PC-9 (cell line): ENCODE measurements at regions of chr3 and their contacts with region 1.

Region 1: GRCh38 chr3:13884851-13885703 is 5.2 kb upstream of the WNT7A start:
- DNase-seq: peak; percentile 49 to 72
- H3K4me3 ChIP-seq: no peak overlapping the region
- H3K27ac ChIP-seq: no peak overlapping the region
- H3K4me1 ChIP-seq: peaks cover 7% of the 10 kb centered on the region
- H3K27me3 ChIP-seq: no peaks in the 10 kb centered on the region
- CTCF ChIP-seq: peak; percentile 98

Region 2: DNA sequence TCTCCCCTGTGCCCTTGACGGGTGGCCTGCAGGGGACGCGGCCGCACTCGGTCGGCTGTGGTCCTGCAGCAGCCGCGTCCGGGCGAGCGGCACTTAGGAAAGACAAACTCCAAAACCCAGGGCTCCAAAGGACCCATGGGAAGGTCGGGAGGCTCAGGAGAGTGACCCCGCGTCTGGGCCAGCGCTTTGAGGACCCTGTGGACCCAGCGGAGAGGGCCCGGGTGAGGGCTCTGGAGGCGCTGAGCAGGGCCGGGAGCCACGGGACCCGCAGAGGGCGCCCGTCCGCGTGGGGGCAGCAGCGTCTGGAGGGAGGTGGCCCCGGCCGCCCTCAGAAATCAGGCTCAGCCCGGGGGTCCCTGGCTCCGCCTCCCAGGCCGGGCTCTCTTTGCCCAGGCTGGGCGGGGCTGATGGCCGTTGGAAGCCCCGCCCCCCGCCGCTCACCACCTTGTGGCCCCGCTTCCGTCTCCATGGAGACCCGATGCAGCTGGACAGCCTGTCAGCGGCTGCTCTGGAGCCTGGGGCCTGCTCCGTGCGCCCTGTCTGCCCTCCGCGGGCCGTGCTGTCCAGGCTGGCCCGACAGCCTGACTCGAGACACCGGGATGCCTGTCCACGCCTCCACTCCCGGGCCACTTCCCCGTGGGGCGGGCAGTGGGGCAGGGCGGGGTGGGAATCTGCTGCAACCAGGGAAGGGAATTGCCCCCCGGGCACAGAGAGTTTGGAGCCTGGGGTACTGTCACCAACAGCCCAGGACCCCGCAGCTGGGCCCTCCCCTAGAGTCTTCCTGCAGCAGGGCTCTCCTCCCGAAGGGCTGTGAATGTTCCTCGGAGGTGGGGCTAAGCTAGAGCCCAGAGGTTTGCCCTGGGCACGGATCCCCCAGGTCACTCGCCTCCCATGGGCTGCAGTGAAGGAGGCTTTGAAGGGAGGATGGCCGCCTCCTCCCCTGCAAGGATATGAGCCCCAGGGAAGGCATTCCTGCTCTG is 1008.9 kb before region 1 on chr3:
- CTCF ChIA-PET with region 1: no interaction called
- POLR2A ChIA-PET with region 1: no interaction called
- intact Hi-C with region 1: loop called (anchors 10 kb)
- DNase-seq: peak in 1 of 2 experiments; percentile 31
- H3K4me3 ChIP-seq: no peak overlapping the region
- H3K27ac ChIP-seq: no peak overlapping the region
- H3K4me1 ChIP-seq: no peaks in the 10 kb centered on the region
- H3K27me3 ChIP-seq: peaks cover 33% of the 10 kb centered on the region
- CTCF ChIP-seq: no peak

Region 3: DNA sequence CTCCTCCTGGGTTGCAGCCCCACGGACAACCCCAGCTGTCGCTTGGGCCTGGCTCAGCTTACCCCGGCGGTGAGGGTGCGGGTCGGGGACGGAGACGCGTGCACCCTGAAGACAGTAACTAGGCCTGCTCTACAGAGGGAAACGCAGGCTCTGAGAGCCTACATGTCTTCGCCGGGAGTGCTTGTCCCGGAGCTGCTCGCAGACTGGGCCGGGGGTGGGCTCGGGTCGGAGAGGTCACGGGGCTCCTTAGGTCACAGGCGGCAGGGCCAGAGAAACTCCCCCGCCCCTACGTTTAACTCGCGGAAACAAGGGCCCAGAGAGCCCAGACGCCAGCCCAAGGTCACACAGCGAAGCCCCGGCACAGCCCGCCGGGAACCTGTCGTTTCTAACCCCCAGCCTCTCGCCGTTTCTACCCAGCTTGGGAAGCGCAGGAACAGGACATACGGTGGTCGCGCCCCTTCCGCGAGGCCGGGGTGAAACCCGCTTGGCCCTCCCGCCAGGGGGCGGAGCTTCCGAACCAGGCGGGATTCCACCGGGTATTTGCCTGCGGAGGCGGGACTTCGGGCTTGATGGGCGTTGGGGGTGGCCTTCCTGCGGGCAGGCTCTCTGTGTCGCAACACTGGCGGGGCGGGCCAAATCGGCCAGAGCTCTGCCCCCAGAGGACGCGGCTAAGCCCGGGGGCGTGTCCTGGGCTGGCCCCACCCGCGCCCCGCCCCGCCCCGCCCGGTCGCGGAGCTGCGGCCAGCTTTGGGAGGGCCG is 405.3 kb before region 1 on chr3 and contains the start of gene HDAC11:
- CTCF ChIA-PET with region 1: interaction called, 15 read pairs
- POLR2A ChIA-PET with region 1: no interaction called
- intact Hi-C with region 1: no loop called
- DNase-seq: peak; percentile 87 to 98
- H3K4me3 ChIP-seq: peak within 1 kb of the TSS; percentile 94
- H3K27ac ChIP-seq: no peak within 1 kb of the TSS
- H3K4me1 ChIP-seq: peaks cover 39% of the 10 kb centered on the region
- H3K27me3 ChIP-seq: no peaks in the 10 kb centered on the region
- CTCF ChIP-seq: peak; percentile 55
- total RNA-seq, gene HDAC11: 18.4 and 24.3 TPM in 2 replicates

Region 4: DNA sequence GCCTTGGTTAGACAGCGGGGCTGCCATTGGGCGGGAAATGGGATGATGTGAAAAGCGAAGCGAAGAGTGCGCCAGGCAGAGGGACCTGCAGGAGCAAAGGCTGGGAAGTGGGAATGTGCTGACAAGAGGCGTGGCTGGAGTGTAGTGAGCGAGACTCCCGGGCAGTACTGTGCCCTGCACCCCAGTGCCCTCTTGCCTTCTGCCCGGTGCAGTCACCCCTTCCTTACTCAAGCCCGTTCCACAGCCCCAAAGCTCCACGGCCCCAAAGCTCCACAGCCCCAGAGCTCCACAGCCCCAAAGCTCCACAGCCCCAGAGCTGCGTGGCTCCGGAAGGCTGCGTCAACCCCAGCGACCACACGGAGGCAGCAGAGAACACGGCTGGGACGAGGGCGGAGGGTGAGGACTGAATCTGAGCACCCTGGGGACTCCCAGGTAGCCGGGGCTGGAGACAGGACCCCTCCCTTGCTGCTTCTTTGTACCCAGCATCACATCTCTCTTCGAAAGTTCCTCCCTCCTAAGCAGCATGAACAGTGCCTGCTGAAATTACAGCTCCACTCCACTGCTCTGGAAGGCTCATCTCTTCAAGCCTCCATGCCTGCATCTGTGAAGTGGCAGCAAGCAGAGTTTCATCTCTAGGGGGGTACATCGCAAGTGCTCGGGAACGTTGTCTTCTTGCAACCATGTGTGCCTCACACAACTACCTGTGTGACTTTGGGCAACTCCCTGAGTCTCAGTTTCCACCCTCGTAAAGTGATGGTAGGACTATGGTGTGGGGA is 227.2 kb before region 1 on chr3:
- CTCF ChIA-PET with region 1: interaction called, 37 read pairs
- POLR2A ChIA-PET with region 1: no interaction called
- intact Hi-C with region 1: loop called (anchors 1 kb)
- DNase-seq: peak; percentile 39 to 67
- H3K4me3 ChIP-seq: no peak overlapping the region
- H3K27ac ChIP-seq: no peak overlapping the region
- H3K4me1 ChIP-seq: peaks cover 34% of the 10 kb centered on the region
- H3K27me3 ChIP-seq: no peaks in the 10 kb centered on the region
- CTCF ChIP-seq: peak; percentile 95

Region 5: DNA sequence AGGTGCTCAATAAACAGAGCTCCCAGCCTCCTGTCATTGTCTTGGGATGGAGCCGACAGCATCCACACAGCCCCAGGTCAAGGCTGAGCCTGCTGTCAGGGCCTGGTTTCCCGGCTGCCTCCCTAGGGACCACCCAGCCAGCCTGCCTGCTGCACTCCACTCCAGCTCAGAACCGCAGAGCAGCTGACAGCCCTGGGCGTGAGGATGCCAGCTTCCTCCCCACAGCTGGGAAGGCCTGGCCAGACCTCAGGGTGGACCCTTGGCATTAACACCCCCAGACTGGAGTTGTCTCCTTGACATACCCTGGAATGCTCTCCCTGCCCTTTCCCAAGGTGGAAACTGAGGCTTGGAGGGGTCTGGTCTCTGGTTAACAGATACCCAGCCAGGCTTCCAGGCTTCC is 117.2 kb before region 1 on chr3:
- CTCF ChIA-PET with region 1: interaction called, 5 read pairs
- POLR2A ChIA-PET with region 1: no interaction called
- intact Hi-C with region 1: loop called (anchors 2 kb)
- DNase-seq: no peak
- H3K4me3 ChIP-seq: no peak overlapping the region
- H3K27ac ChIP-seq: no peak overlapping the region
- H3K4me1 ChIP-seq: peaks cover 23% of the 10 kb centered on the region
- H3K27me3 ChIP-seq: no peaks in the 10 kb centered on the region
- CTCF ChIP-seq: no peak

Region 6: DNA sequence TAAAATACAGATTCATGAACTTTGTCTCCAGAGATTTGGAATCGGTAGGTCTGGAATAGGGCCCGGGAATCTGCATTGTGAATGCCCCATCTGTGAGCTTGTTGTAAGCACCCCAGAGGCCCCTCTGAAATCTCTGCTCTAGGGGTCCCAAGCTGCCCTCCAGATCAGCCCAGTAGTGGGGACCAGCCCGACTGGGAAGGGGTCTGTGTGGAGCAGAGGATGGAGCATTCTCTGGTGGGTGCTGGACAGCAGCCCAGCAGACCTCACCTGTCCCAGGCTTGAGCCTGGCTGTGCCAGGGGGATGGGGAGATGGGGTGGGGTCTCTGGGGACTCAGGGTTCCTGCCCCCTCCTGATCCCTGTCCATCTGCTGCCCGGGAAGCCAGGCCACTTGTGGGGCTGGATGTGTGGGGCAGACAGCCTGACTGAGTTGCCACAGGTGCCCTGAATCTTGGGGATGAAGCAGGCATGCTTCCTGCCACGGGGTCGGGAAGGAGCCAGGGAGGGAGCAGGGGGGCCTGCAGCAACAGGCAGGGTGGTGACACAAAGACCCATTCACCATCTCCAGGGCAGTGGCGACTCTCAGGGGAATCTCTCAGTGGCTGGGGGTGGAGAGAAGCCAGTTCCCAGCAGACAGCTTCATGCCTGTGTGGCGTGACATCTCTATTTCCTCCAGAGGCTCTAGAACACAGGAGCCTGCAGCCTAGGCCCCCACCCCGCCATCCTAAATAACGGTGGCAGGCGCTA is 104.5 kb before region 1 on chr3:
- CTCF ChIA-PET with region 1: no interaction called
- POLR2A ChIA-PET with region 1: interaction called, 12 read pairs
- intact Hi-C with region 1: no loop called
- DNase-seq: no peak
- H3K4me3 ChIP-seq: no peak overlapping the region
- H3K27ac ChIP-seq: no peak overlapping the region
- H3K4me1 ChIP-seq: no peaks in the 10 kb centered on the region
- H3K27me3 ChIP-seq: no peaks in the 10 kb centered on the region
- CTCF ChIP-seq: no peak

Region 7: GRCh38 chr3:13822042-13822441 is 63.0 kb before region 1 on chr3:
- CTCF ChIA-PET with region 1: no interaction called
- POLR2A ChIA-PET with region 1: no interaction called
- intact Hi-C with region 1: no loop called
- DNase-seq: peak in 1 of 2 experiments; percentile 53
- H3K4me3 ChIP-seq: no peak overlapping the region
- H3K27ac ChIP-seq: no peak overlapping the region
- H3K4me1 ChIP-seq: peaks cover 55% of the 10 kb centered on the region
- H3K27me3 ChIP-seq: no peaks in the 10 kb centered on the region
- CTCF ChIP-seq: no peak

Region 8: DNA sequence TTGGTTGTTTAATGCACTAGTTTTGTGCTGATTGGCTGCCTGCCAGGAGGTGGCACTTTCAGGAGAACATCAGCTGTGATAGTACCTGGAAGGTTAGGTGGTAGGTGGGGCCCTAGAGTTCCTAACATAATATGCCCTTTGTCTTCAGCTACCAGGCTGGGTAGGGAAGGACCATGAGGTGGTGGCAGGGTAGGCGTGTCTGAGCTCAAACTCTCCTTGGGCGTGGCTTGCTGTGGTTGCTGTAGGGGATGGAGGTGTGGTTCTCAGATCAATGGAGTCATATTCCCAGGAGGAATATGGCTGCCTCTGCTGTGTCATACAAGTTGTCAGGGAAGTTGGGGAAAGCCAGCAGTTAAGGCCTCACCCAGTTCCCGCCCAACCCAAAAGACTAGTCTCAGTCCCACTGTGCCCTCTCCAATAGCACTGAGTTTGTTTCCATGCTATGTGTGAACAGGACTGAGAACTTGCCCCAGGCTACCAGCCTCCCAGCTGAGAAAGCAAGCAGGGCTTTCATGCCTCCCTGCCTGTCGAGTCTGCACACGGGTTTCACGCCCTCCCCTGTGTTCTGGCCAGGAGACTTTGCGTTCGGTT is 131.9 kb after region 1 on chr3:
- CTCF ChIA-PET with region 1: no interaction called
- POLR2A ChIA-PET with region 1: no interaction called
- intact Hi-C with region 1: no loop called
- DNase-seq: peak; percentile 79 to 88
- H3K4me3 ChIP-seq: no peak overlapping the region
- H3K27ac ChIP-seq: 0 out of 2 replicates have a peak overlapping the region, but pooled peaks have one; percentile 24
- H3K4me1 ChIP-seq: peaks cover 7% of the 10 kb centered on the region; the same call in 1 of the 2 replicates
- H3K27me3 ChIP-seq: no peaks in the 10 kb centered on the region; the same call in 1 of the 2 replicates
- CTCF ChIP-seq: no peak

Region 9: DNA sequence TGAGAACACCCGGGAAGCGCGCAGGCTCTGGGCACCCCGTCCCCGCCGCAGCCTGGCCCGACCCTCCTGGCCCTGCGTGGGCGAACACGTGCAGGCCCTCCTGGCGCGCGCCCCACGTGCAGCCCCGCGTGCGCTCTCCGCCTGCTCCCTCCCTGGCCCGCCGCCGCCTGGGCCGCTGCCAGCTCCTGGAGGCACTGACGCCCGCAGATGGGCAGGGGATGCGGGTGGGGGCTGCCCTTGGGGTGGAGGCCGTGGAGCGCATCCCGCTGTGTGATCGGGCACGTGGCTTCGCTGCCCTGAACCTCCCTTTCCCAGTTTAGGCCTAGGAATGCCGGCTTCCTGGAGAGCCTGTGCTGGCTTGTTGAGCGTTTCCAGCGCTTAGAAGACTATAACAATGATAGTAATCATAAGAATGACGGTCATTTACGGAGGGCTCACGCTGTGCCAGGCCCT is 412.7 kb after region 1 on chr3:
- CTCF ChIA-PET with region 1: no interaction called
- POLR2A ChIA-PET with region 1: no interaction called
- intact Hi-C with region 1: no loop called
- DNase-seq: no peak
- H3K4me3 ChIP-seq: no peak overlapping the region
- H3K27ac ChIP-seq: no peak overlapping the region
- H3K4me1 ChIP-seq: no peaks in the 10 kb centered on the region
- H3K27me3 ChIP-seq: no peaks in the 10 kb centered on the region
- CTCF ChIP-seq: no peak

Region 10: GRCh38 chr3:14431892-14432834 is 547.1 kb after region 1 on chr3:
- CTCF ChIA-PET with region 1: no interaction called
- POLR2A ChIA-PET with region 1: no interaction called
- intact Hi-C with region 1: no loop called
- DNase-seq: peak; percentile 92 to 94
- H3K4me3 ChIP-seq: no peak overlapping the region
- H3K27ac ChIP-seq: peak overlapping the region; percentile 77
- H3K4me1 ChIP-seq: peaks cover 88% of the 10 kb centered on the region
- H3K27me3 ChIP-seq: no peaks in the 10 kb centered on the region
- CTCF ChIP-seq: no peak